Mammary epithelial cell (primary cell): ENCODE measurements at regions of chr1 and their contacts with region 1.

Region 1: GRCh38 chr1:29379443-29380073 is 143.2 kb downstream of the PTPRU start:
- DNase-seq: peak; percentile 55
- H3K4me3 ChIP-seq: no peak overlapping the region
- H3K27ac ChIP-seq: no peak overlapping the region
- H3K4me1 ChIP-seq: peaks cover 18% of the 10 kb centered on the region
- H3K27me3 ChIP-seq: no peaks in the 10 kb centered on the region
- CTCF ChIP-seq: peak; percentile 80 to 90

Region 2: GRCh38 chr1:29420202-29420601 is 40.6 kb after region 1 on chr1:
- CTCF ChIA-PET with region 1: no interaction called
- dilution Hi-C with region 1: no loop called
- in situ Hi-C with region 1: no loop called
- intact Hi-C with region 1: no loop called
- DNase-seq: no peak
- H3K4me3 ChIP-seq: no peak overlapping the region
- H3K27ac ChIP-seq: no peak overlapping the region
- H3K4me1 ChIP-seq: no peaks in the 10 kb centered on the region
- H3K27me3 ChIP-seq: peaks cover 2% of the 10 kb centered on the region
- CTCF ChIP-seq: no peak

Region 3: GRCh38 chr1:29431138-29431537 is 51.6 kb after region 1 on chr1:
- CTCF ChIA-PET with region 1: no interaction called
- dilution Hi-C with region 1: loop called (anchors 5 kb)
- in situ Hi-C with region 1: no loop called
- intact Hi-C with region 1: no loop called
- DNase-seq: no peak
- H3K4me3 ChIP-seq: no peak overlapping the region
- H3K27ac ChIP-seq: no peak overlapping the region
- H3K4me1 ChIP-seq: peaks cover 3% of the 10 kb centered on the region
- H3K27me3 ChIP-seq: no peaks in the 10 kb centered on the region
- CTCF ChIP-seq: no peak

Region 4: GRCh38 chr1:29708901-29709710 is 329.5 kb after region 1 on chr1:
- CTCF ChIA-PET with region 1: no interaction called
- dilution Hi-C with region 1: no loop called
- in situ Hi-C with region 1: no loop called
- intact Hi-C with region 1: loop called (anchors 5 kb)
- DNase-seq: peak; percentile 86
- H3K4me3 ChIP-seq: no peak overlapping the region
- H3K27ac ChIP-seq: peak overlapping the region; percentile 85
- H3K4me1 ChIP-seq: peaks cover 58% of the 10 kb centered on the region
- H3K27me3 ChIP-seq: no peaks in the 10 kb centered on the region
- CTCF ChIP-seq: no peak

Region 5: GRCh38 chr1:29849038-29849750 is 469.6 kb after region 1 on chr1:
- CTCF ChIA-PET with region 1: no interaction called
- dilution Hi-C with region 1: no loop called
- in situ Hi-C with region 1: no loop called
- intact Hi-C with region 1: loop called (anchors 5 kb)
- DNase-seq: peak; percentile 41
- H3K4me3 ChIP-seq: no peak overlapping the region
- H3K27ac ChIP-seq: no peak overlapping the region
- H3K4me1 ChIP-seq: no peaks in the 10 kb centered on the region
- H3K27me3 ChIP-seq: peaks cover 2% of the 10 kb centered on the region
- CTCF ChIP-seq: peak; percentile 49 to 65

Region 6: GRCh38 chr1:30111431-30111830 is 731.9 kb after region 1 on chr1:
- CTCF ChIA-PET with region 1: no interaction called
- dilution Hi-C with region 1: no loop called
- in situ Hi-C with region 1: no loop called
- intact Hi-C with region 1: loop called (anchors 1 kb)
- DNase-seq: peak; percentile 16
- H3K4me3 ChIP-seq: no peak overlapping the region
- H3K27ac ChIP-seq: no peak overlapping the region
- H3K4me1 ChIP-seq: no peaks in the 10 kb centered on the region
- H3K27me3 ChIP-seq: no peaks in the 10 kb centered on the region
- CTCF ChIP-seq: peak; percentile 43 to 69